Caco-2 (cell line): ENCODE measurements at regions of chr11 and their contacts with region 1.

Region 1: GRCh38 chr11:10735481-10736475 is 15.3 kb upstream of the CTR9 start:
- DNase-seq: peak; percentile 97
- H3K4me3 ChIP-seq: peak overlapping the region; percentile 6
- H3K4me3 Mint-ChIP-seq: peak overlapping the region; percentile 52
- H3K27ac Mint-ChIP-seq: peak overlapping the region; percentile 24
- H3K4me1 ChIP-seq: peaks cover 19% of the 10 kb centered on the region
- H3K4me1 Mint-ChIP-seq: peaks cover 32% of the 10 kb centered on the region
- H3K27me3 ChIP-seq: no peaks in the 10 kb centered on the region
- H3K27me3 Mint-ChIP-seq: no peaks in the 10 kb centered on the region
- CTCF ChIP-seq: peak; percentile 97 to 98

Region 2: GRCh38 chr11:10328314-10329090 is 407.3 kb before region 1 on chr11:
- CTCF ChIA-PET with region 1: no interaction called
- POLR2A ChIA-PET with region 1: no interaction called
- intact Hi-C with region 1: loop called (anchors 5 kb)
- DNase-seq: peak; percentile 66 to 73
- H3K4me3 ChIP-seq: no peak overlapping the region
- H3K4me3 Mint-ChIP-seq: peak overlapping the region; percentile 39
- H3K27ac Mint-ChIP-seq: peak overlapping the region; percentile 14
- H3K4me1 ChIP-seq: peaks cover 63% of the 10 kb centered on the region
- H3K4me1 Mint-ChIP-seq: peaks cover 36% of the 10 kb centered on the region
- H3K27me3 ChIP-seq: no peaks in the 10 kb centered on the region
- H3K27me3 Mint-ChIP-seq: no peaks in the 10 kb centered on the region
- CTCF ChIP-seq: no peak

Region 3: DNA sequence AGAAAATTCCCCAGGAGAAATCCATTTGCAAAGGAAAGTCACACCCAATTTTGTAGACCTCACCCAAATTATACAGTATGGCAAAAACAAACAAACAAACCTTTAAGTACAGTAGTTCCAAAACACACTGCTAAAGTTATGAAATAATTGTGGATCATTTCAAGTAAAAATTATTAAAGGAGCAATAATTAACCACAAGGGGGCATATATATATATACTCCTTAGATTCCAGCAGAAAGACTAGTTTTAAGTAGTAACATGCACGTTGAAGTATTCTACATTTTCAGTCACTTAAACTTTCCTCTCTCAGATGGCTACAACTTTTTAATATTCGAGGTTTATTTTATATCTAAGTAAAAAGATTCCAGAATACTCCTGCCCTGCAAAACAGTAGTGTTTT is 221.6 kb before region 1 on chr11:
- CTCF ChIA-PET with region 1: no interaction called
- POLR2A ChIA-PET with region 1: no interaction called
- intact Hi-C with region 1: loop called (anchors 1 kb)
- DNase-seq: no peak
- H3K4me3 ChIP-seq: no peak overlapping the region
- H3K4me3 Mint-ChIP-seq: no peak overlapping the region
- H3K27ac Mint-ChIP-seq: no peak overlapping the region
- H3K4me1 ChIP-seq: no peaks in the 10 kb centered on the region
- H3K4me1 Mint-ChIP-seq: no peaks in the 10 kb centered on the region
- H3K27me3 ChIP-seq: no peaks in the 10 kb centered on the region
- H3K27me3 Mint-ChIP-seq: no peaks in the 10 kb centered on the region
- CTCF ChIP-seq: peak in 1 of 2 experiments; percentile 33

Region 4: DNA sequence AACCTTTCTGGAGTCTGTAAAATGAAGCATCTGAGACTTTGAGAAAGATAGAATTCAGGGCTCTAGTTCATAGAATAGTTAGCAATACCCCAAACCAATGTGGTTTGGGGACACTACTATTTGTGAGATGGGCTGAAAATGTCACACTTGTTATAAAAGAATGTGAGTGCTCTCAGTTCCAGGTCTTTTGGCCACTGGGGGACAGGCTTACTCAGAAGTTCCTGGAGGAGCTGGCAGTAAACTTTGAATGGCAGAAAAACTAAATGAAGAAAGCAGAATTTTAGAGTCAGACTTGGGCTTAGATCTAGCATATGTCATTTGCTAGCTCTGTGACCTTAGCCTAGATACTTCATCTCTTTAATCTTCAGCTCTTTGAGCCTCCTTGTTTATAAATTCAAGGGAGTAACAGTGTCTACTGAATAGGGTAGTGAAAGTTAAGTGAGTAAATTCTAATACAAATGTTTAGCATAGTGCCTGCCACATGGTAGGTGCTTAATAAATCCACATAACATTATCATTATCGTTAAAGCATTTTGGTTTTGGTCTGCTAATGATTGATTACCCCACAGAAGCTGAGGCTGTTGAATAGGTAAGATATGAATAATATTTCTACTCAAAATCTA is 171.0 kb before region 1 on chr11:
- CTCF ChIA-PET with region 1: no interaction called
- POLR2A ChIA-PET with region 1: no interaction called
- intact Hi-C with region 1: loop called (anchors 1 kb)
- DNase-seq: peak in 1 of 2 experiments; percentile 16
- H3K4me3 ChIP-seq: no peak overlapping the region
- H3K4me3 Mint-ChIP-seq: no peak overlapping the region
- H3K27ac Mint-ChIP-seq: no peak overlapping the region
- H3K4me1 ChIP-seq: peaks cover 7% of the 10 kb centered on the region; the same call in 1 of the 2 replicates
- H3K4me1 Mint-ChIP-seq: peaks cover 9% of the 10 kb centered on the region
- H3K27me3 ChIP-seq: no peaks in the 10 kb centered on the region
- H3K27me3 Mint-ChIP-seq: no peaks in the 10 kb centered on the region
- CTCF ChIP-seq: peak in 1 of 2 experiments; percentile 22

Region 5: DNA sequence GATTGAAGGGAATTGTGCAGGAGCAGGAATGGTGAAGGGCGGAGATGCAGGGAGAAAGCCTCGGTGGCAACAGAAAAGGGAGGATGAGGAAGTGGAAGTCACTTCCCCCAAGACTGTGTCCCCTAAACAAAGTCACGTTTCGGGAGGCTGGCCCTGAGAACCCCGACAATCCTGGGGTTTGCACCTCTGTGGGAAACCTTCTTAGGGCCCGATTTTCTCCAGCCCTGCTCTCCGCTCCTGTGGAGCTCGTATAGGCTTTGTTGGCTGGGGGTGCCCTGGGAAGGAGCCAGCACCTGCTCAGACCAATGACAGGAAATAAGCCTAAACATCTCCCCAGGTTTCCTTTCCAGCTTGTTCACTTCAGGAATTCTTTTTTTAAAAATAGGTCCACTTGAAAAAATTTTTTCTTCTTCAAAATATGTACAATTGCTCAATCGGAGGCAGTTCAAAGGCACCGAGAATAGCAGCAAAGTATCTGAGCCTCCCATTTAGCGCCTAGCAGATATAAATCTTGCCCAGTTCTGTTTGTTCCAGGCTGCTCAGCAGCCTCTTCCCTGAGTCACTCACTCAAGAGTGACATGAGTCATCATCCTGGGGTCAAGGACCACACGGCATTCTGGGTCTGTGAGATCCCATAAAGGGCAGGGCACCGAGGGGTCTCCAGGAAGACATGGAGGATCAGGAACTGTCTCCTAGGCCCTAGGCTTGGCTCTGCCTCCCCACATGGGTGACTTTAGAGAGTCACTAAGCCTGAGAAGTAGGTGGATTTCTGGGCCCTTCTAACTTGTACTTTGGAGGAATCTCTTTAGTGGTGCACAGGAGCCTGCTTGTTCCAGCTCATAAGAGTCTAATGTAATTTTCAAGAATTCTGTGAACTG is 76.2 kb before region 1 on chr11:
- CTCF ChIA-PET with region 1: interaction called, 3 read pairs
- POLR2A ChIA-PET with region 1: no interaction called
- intact Hi-C with region 1: loop called (anchors 1 kb)
- DNase-seq: peak; percentile 89 to 95
- H3K4me3 ChIP-seq: no peak overlapping the region
- H3K4me3 Mint-ChIP-seq: peak overlapping the region; percentile 32
- H3K27ac Mint-ChIP-seq: peak overlapping the region; percentile 97
- H3K4me1 ChIP-seq: peaks cover 69% of the 10 kb centered on the region
- H3K4me1 Mint-ChIP-seq: peaks cover 43% of the 10 kb centered on the region
- H3K27me3 ChIP-seq: no peaks in the 10 kb centered on the region
- H3K27me3 Mint-ChIP-seq: no peaks in the 10 kb centered on the region
- CTCF ChIP-seq: no peak

Region 6: GRCh38 chr11:10857709-10858438 is 122.1 kb after region 1 on chr11 and contains the start of gene ZBED5:
- CTCF ChIA-PET with region 1: no interaction called
- POLR2A ChIA-PET with region 1: no interaction called
- intact Hi-C with region 1: no loop called
- DNase-seq: peak; percentile 96 to 97
- H3K4me3 ChIP-seq: peak within 1 kb of the TSS; percentile 90
- H3K4me3 Mint-ChIP-seq: peak within 1 kb of the TSS; percentile 97
- H3K27ac Mint-ChIP-seq: peak within 1 kb of the TSS; percentile 96
- H3K4me1 ChIP-seq: peaks cover 7% of the 10 kb centered on the region; the same call in 1 of the 2 replicates
- H3K4me1 Mint-ChIP-seq: peaks cover 13% of the 10 kb centered on the region
- H3K27me3 ChIP-seq: no peaks in the 10 kb centered on the region
- H3K27me3 Mint-ChIP-seq: no peaks in the 10 kb centered on the region
- CTCF ChIP-seq: peak; percentile 23 to 29
- total RNA-seq, gene ZBED5: 42.1 and 53.2 TPM in 2 replicates